ENCODE measurements at regions of chr19 and their contacts with region 1.

Region 1: DNA sequence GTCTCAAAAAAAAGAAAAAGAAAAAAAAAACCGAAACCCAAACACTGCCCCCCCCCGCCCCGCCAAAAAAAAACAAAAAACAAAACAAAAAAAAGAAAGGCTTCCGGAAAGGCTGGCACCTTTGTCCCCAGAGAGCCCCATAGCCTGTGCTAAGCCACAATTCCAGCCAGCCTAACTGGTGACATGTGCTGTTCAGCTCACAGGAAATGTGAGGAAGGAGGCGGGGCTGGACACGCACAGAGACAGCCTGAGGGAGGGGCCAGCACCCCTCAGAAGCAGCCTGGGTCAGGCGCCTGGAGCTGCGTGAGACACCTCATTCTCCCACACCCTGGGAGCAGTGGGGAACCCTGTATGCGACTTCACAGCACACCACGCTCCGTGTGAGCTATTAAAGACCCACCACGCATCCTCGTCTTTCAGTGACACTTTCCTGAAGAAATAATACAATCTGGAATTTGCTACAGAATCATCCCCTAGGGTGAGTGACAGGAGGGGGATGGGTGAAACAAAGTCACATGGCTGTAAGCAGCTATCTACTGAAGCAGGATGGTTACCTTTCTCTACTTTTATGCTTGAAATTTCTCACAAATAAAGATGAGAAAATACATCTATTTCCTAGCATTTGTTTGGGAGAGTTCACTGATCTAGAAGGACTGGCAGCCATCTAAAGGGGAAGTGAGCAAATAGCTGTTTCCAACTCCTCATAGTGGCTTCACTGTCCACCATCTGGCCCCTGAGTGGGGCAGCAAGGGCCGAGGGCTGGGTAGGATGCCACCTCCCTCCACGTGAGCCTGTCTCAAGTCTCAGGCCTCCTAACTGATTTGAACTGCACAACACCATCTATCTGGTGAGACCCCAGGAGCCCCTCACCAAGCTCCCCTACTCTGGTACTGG is 12.3 kb upstream of the SLC35E1 start:
- DNase-seq: peak; percentile 74 to 98 (median 88)
- ATAC-seq: peak; percentile 78
- H3K4me3 ChIP-seq: peak overlapping the region; percentile 46
- H3K4me3 Mint-ChIP-seq: peak overlapping the region; percentile 81
- H3K27ac ChIP-seq: peak overlapping the region; percentile 77 to 85
- H3K27ac Mint-ChIP-seq: peak overlapping the region; percentile 98
- H3K4me1 ChIP-seq: peaks cover 90% of the 10 kb centered on the region
- H3K4me1 Mint-ChIP-seq: peaks cover 81% of the 10 kb centered on the region
- H3K27me3 ChIP-seq: no peaks in the 10 kb centered on the region
- H3K27me3 Mint-ChIP-seq: no peaks in the 10 kb centered on the region
- CTCF ChIP-seq: no peak

Region 2: GRCh38 chr19:16566161-16566560 is 18.3 kb before region 1 on chr19:
- CTCF ChIA-PET with region 1: interaction called, 5 read pairs
- POLR2A ChIA-PET with region 1: interaction called, 26 read pairs
- intact Hi-C with region 1: loop called (anchors 1 kb)
- DNase-seq: peak; percentile 72 to 96 (median 81)
- ATAC-seq: peak; percentile 98
- H3K4me3 ChIP-seq: peak overlapping the region; percentile 15
- H3K4me3 Mint-ChIP-seq: peak overlapping the region; percentile 89
- H3K27ac ChIP-seq: peak overlapping the region; percentile 83 to 84
- H3K27ac Mint-ChIP-seq: peak overlapping the region; percentile 96
- H3K4me1 ChIP-seq: peaks cover 64% of the 10 kb centered on the region
- H3K4me1 Mint-ChIP-seq: peaks cover 48% of the 10 kb centered on the region
- H3K27me3 ChIP-seq: no peaks in the 10 kb centered on the region
- H3K27me3 Mint-ChIP-seq: no peaks in the 10 kb centered on the region
- CTCF ChIP-seq: no peak

Region 3: DNA sequence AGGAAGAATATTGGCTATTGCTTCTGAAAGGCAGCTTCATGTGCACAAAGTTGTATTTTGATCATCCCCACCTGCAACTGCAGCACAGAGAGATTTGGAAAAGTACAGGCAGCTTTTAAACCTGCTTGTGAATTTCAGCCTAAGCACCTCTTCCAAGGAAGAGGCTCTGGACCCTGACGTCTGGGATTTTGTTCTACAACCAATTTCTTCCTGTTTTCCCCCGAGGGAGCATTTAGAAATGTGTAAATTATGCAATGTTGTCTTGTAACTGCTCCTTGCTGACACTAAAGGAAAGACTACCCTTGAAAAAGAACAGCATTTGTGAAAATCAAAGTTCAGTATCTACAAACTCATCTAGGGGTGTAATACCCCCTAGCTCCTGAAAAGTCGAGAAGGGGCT is 28.1 kb after region 1 on chr19:
- CTCF ChIA-PET with region 1: interaction called, 15 read pairs
- POLR2A ChIA-PET with region 1: interaction called, 3 read pairs
- intact Hi-C with region 1: no loop called
- DNase-seq: no peak
- ATAC-seq: no peak
- H3K4me3 ChIP-seq: no peak overlapping the region
- H3K4me3 Mint-ChIP-seq: no peak overlapping the region
- H3K27ac ChIP-seq: no peak overlapping the region
- H3K27ac Mint-ChIP-seq: no peak overlapping the region
- H3K4me1 ChIP-seq: peaks cover 52% of the 10 kb centered on the region
- H3K4me1 Mint-ChIP-seq: peaks cover 86% of the 10 kb centered on the region
- H3K27me3 ChIP-seq: no peaks in the 10 kb centered on the region
- H3K27me3 Mint-ChIP-seq: no peaks in the 10 kb centered on the region
- CTCF ChIP-seq: no peak